PC-9 (cell line): ENCODE measurements at regions of chr9 and their contacts with region 1.

Region 1: DNA sequence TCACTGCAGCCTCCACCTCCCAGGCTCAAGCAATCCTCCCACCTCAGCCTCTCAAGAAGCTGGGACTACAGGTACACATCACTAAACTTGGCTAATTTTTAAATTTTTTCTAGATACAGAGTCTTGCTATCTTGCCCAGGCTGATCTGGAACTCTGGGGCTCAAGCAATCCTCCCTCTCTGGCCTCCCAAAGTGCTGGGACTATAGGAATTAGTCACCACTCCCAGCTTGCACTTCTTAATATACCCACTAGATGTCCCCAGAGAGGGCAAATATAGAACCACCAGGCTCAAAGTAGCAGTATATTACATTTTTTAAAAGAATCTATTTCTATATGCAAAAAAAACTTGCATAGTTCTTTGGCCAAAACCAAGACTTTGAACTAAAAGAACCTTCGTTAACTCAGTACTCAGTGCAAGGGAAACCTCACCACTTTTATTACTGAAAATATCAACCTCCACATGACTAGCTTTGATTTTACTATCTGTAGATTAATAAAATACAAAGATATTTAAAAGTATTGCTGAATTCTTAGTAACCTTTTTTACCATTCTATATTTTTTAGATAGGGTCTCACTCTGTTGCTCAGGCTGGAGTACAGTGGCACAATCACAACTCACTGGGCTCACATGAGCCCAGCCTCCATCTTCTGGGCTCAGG is 25.8 kb upstream of the HSD17B3 start:
- DNase-seq: peak; percentile 29 to 38
- H3K4me3 ChIP-seq: no peak overlapping the region
- H3K27ac ChIP-seq: no peak overlapping the region
- H3K4me1 ChIP-seq: peaks cover 16% of the 10 kb centered on the region
- H3K27me3 ChIP-seq: no peaks in the 10 kb centered on the region
- CTCF ChIP-seq: peak; percentile 90

Region 2: GRCh38 chr9:96317335-96317980 is 10.4 kb before region 1 on chr9:
- CTCF ChIA-PET with region 1: no interaction called
- POLR2A ChIA-PET with region 1: no interaction called
- intact Hi-C with region 1: no loop called
- DNase-seq: peak; percentile 34 to 43
- H3K4me3 ChIP-seq: no peak overlapping the region
- H3K27ac ChIP-seq: no peak overlapping the region
- H3K4me1 ChIP-seq: no peaks in the 10 kb centered on the region
- H3K27me3 ChIP-seq: no peaks in the 10 kb centered on the region
- CTCF ChIP-seq: peak; percentile 86

Region 3: DNA sequence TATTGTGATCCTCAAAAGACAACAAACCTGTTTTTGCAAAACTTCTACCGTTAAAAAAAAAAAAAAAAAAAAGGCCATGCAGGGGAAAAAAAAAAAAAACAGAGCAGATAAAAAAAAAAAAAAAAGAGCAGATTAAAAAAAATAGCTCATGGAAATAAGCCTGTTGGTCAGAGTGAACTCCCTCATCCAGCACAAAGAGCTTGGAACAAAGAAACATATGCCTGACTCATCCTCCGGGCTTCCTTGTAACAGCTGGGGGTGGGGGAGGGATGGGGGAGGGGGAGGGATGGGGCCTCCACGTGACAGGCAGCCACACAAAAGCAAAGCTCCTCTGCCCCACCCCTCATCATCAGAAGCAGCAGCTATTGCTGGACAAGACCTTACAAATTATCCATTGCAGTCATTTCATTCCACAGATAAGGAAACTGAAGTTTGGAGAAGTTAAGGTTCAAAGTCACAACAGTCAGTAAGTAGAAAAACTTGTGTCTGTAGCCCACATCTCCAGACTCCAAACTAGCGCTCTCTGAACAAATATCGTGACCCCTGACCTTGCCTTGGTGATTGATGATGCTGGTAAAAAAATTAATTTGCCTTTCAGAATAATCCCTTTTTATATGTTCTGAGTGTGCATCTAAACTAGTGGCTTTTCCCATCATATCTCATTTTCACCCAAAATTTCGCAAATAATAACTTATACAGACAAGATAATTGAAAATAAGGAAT is 16.8 kb after region 1 on chr9:
- CTCF ChIA-PET with region 1: interaction called, 14 read pairs
- POLR2A ChIA-PET with region 1: no interaction called
- intact Hi-C with region 1: no loop called
- DNase-seq: peak; percentile 66 to 87
- H3K4me3 ChIP-seq: no peak overlapping the region
- H3K27ac ChIP-seq: peak overlapping the region; percentile 28
- H3K4me1 ChIP-seq: peaks cover 25% of the 10 kb centered on the region
- H3K27me3 ChIP-seq: no peaks in the 10 kb centered on the region
- CTCF ChIP-seq: no peak

Region 4: DNA sequence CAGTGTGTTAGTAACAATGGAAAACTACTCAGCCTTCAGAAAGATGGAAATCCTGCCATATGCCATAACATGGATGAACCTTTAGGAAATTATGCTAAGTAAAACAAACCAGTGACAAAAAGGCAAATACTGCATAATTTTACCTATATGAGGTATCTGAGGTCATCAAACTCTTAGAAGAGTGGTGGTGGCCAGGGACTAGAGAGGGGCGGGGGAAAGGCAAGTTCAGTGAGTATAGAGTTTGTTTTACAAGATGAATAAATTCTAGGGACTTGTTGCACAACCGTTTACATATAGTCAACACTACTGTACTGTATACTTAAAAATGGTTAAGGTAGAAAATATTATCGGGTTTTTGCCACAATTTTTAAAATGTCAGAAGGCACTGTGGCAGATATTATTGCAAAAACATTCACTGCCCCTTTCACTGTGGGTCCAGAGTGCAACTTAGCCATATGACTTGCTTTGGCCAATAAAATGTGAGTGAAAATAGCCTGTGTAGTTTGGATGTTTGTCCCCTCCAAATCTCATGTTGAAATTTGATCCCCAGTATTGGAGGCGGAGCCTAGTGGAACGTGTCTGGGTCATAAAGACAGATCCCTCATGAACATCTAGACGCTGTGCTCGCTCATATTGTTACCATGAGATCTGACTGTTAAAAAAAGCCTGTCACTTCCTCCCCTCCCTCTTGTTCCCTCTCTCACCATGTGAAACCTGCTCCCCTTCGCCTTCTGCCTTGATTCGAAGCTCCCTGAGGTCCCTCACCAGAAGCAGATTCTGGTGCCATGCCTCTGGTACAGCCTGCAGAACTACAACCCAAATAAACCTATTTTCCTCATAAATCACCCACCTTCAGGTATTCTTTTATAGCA is 80.8 kb after region 1 on chr9:
- CTCF ChIA-PET with region 1: interaction called, 12 read pairs
- POLR2A ChIA-PET with region 1: no interaction called
- intact Hi-C with region 1: no loop called
- DNase-seq: no peak
- H3K4me3 ChIP-seq: no peak overlapping the region
- H3K27ac ChIP-seq: no peak overlapping the region
- H3K4me1 ChIP-seq: no peaks in the 10 kb centered on the region
- H3K27me3 ChIP-seq: no peaks in the 10 kb centered on the region
- CTCF ChIP-seq: no peak

Region 5: GRCh38 chr9:96566498-96567207 is 238.8 kb after region 1 on chr9:
- CTCF ChIA-PET with region 1: interaction called, 4 read pairs
- POLR2A ChIA-PET with region 1: no interaction called
- intact Hi-C with region 1: loop called (anchors 5 kb)
- DNase-seq: peak; percentile 78 to 91
- H3K4me3 ChIP-seq: peak overlapping the region; percentile 88
- H3K27ac ChIP-seq: peak overlapping the region; percentile 92
- H3K4me1 ChIP-seq: peaks cover 31% of the 10 kb centered on the region
- H3K27me3 ChIP-seq: no peaks in the 10 kb centered on the region
- CTCF ChIP-seq: peak; percentile 61

Region 6: GRCh38 chr9:96661711-96662110 is 333.9 kb after region 1 on chr9:
- CTCF ChIA-PET with region 1: interaction called, 12 read pairs
- POLR2A ChIA-PET with region 1: no interaction called
- intact Hi-C with region 1: loop called (anchors 2 kb)
- DNase-seq: no peak
- H3K4me3 ChIP-seq: no peak overlapping the region
- H3K27ac ChIP-seq: no peak overlapping the region
- H3K4me1 ChIP-seq: 0 out of 2 replicates have a peak, but pooled peaks cover 4% of the 10 kb centered on the region
- H3K27me3 ChIP-seq: no peaks in the 10 kb centered on the region
- CTCF ChIP-seq: no peak